A549 (cell line): ENCODE measurements at regions of chr3 and their contacts with region 1.

Region 1: GRCh38 chr3:66407611-66408218 is 93.1 kb downstream of the LRIG1 start:
- DNase-seq: peak; percentile 29 to 72
- ATAC-seq: peak; percentile 74 to 95
- H3K4me3 ChIP-seq: no peak overlapping the region
- H3K27ac ChIP-seq: no peak overlapping the region
- H3K4me1 ChIP-seq: no peaks in the 10 kb centered on the region
- CTCF ChIP-seq: peak; percentile 71
- EP300 ChIP-seq: no peak
- POLR2A ChIP-seq: no peak
- RAD21 ChIP-seq: peak; percentile 81 to 84

Region 2: GRCh38 chr3:66386925-66387650 is 20.6 kb before region 1 on chr3:
- CTCF ChIA-PET with region 1: interaction called, 10 read pairs
- POLR2A ChIA-PET with region 1: no interaction called
- DNase-seq: no peak
- ATAC-seq: no peak
- H3K4me3 ChIP-seq: no peak overlapping the region
- H3K27ac ChIP-seq: no peak overlapping the region
- H3K4me1 ChIP-seq: no peaks in the 10 kb centered on the region
- CTCF ChIP-seq: no peak
- EP300 ChIP-seq: no peak
- POLR2A ChIP-seq: no peak
- RAD21 ChIP-seq: no peak

Region 3: DNA sequence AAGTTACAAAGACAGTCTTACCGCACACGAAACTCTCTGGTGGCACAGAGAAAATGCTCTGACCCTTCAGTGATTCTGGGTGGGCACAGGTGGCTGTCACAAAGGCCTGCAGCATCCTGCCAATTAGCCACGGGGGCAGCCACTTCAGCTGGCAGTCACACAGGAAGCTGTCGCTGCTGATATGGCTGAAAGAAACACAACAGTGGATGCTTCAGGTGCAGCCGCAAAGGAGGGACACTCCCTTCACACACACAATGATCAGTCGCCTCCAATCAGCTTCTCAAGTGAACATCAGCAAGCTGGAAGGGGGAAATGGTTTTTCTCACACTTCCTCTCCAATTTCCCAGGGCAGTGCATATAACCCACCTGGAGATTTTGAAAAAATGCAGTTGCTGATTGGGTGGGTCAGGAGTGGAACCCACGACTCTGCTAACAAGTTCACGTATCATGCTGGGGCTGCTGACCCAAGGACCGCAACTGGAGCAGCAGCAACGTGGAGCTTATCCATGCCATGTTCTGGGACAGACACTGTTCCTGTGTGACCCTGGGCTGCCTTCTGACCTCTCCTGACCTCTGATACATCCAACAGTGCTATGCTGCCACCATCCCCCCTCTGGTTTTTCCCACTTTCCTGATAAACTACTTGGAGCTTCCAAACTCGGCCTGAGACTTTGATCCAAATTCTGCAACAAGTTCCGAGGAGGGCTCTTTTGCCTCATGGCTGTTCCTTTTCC is 13.5 kb before region 1 on chr3:
- CTCF ChIA-PET with region 1: interaction called, 24 read pairs
- POLR2A ChIA-PET with region 1: no interaction called
- DNase-seq: no peak
- ATAC-seq: no peak
- H3K4me3 ChIP-seq: no peak overlapping the region
- H3K27ac ChIP-seq: no peak overlapping the region
- H3K4me1 ChIP-seq: no peaks in the 10 kb centered on the region
- CTCF ChIP-seq: no peak
- EP300 ChIP-seq: no peak
- POLR2A ChIP-seq: no peak
- RAD21 ChIP-seq: no peak

Region 4: DNA sequence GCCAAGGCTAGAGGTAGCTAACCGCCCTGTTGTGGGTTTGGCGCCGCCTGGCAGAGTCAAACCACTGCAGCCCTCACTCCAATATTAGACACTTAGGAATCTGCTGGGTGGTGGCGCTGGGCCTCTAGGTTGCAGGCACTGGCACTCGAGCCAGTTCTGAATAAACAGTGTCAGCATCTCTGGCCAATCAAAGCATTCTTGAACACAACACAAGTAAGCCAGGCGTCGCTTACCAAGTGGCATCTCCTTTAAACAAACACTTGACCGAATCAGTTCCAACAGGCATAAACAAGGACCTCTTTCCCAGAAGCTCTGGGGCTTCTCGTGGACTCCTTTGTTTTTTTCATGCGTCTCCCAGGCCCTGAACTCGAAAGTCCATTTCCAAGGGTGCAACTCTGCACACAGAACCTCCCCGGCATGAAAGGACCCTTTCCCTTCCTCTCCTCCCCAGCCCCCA is 10.8 kb after region 1 on chr3:
- CTCF ChIA-PET with region 1: interaction called, 15 read pairs
- POLR2A ChIA-PET with region 1: no interaction called
- DNase-seq: no peak
- ATAC-seq: no peak
- H3K4me3 ChIP-seq: no peak overlapping the region
- H3K27ac ChIP-seq: no peak overlapping the region
- H3K4me1 ChIP-seq: 0 out of 3 replicates have a peak, but pooled peaks cover 3% of the 10 kb centered on the region
- CTCF ChIP-seq: no peak
- EP300 ChIP-seq: no peak
- POLR2A ChIP-seq: no peak
- RAD21 ChIP-seq: no peak

Region 5: DNA sequence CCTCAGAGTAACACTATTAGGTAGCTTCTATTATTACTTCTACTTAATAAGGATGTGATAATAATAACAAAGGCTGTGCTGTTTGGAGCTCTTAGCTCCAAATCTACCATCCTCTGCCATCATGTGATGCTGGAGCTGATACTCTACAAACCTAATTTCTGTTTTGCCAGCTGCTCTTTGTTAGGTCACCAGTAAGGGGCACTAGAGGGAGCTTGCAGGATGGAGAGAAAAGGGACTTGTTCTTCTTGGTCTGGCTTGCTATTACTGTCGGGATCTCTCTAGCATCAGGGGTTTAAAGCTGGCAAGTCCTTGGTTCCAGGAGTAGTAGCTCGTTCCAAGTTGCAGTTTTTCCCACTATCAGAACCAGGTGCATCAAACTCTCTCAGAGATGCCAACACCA is 395.5 kb after region 1 on chr3:
- CTCF ChIA-PET with region 1: interaction called, 18 read pairs
- POLR2A ChIA-PET with region 1: no interaction called
- DNase-seq: no peak
- ATAC-seq: no peak
- H3K4me3 ChIP-seq: no peak overlapping the region
- H3K27ac ChIP-seq: no peak overlapping the region
- H3K4me1 ChIP-seq: no peaks in the 10 kb centered on the region
- CTCF ChIP-seq: no peak
- EP300 ChIP-seq: no peak
- POLR2A ChIP-seq: no peak
- RAD21 ChIP-seq: no peak

Region 6: GRCh38 chr3:66822186-66823008 is 414.7 kb after region 1 on chr3:
- CTCF ChIA-PET with region 1: interaction called, 157 read pairs
- POLR2A ChIA-PET with region 1: no interaction called
- DNase-seq: peak; percentile 25 to 60
- ATAC-seq: peak; percentile 90 to 93
- H3K4me3 ChIP-seq: no peak overlapping the region
- H3K27ac ChIP-seq: no peak overlapping the region
- H3K4me1 ChIP-seq: no peaks in the 10 kb centered on the region
- CTCF ChIP-seq: peak; percentile 54
- EP300 ChIP-seq: no peak
- POLR2A ChIP-seq: no peak
- RAD21 ChIP-seq: peak; percentile 48 to 49; a peak in 4 of 5 replicates

Region 7: GRCh38 chr3:67030785-67031740 is 623.3 kb after region 1 on chr3:
- CTCF ChIA-PET with region 1: no interaction called
- POLR2A ChIA-PET with region 1: no interaction called
- DNase-seq: no peak
- ATAC-seq: no peak
- H3K4me3 ChIP-seq: no peak overlapping the region
- H3K27ac ChIP-seq: no peak overlapping the region
- H3K4me1 ChIP-seq: no peaks in the 10 kb centered on the region
- CTCF ChIP-seq: no peak
- EP300 ChIP-seq: no peak
- POLR2A ChIP-seq: no peak
- RAD21 ChIP-seq: no peak